Activated T-helper 1 cell treated with anti-CD3 and anti-CD28 coated beads, Interleukin-12 subunit alpha, Interleukin-12 subunit beta, Interleukin-2, Interleukin-4 antibody, amounts not matched to agents 30 ng/mL and 10 ng/mL and 1 ng/mL, durations not matched to agents 14 hours and 24 hours and 36 hours (primary cell): ENCODE measurements at regions of chr1 and their contacts with region 1.

Region 1: GRCh38 chr1:28819020-28819419 is 7.0 kb downstream of the OPRD1 start:
- DNase-seq: no peak
- H3K4me3 Mint-ChIP-seq: no peak overlapping the region
- H3K27ac Mint-ChIP-seq: no peak overlapping the region
- H3K4me1 Mint-ChIP-seq: no peaks in the 10 kb centered on the region
- H3K27me3 Mint-ChIP-seq: peaks cover 19% of the 10 kb centered on the region

Region 2: DNA sequence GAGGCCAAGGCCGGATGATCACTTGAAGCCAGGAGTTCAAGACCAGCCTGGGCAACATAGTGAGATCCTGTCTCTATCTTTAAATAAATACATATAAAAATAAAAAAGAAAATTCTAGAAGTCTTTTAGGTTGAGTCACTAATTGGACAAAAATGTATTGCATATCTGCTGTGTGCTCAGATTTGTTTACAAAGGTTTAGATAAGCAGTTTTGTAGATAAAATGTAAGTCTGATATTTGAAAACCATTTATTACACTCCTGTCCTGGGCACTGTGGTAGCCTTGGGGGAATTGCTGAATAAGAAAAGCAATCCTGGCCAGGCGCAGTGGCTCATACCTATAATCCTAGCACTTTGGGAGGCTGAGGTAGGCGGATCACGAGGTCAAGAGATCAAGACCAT is 138.9 kb before region 1 on chr1:
- intact Hi-C with region 1: no loop called
- DNase-seq: no peak
- H3K4me3 Mint-ChIP-seq: no peak overlapping the region
- H3K27ac Mint-ChIP-seq: no peak overlapping the region
- H3K4me1 Mint-ChIP-seq: no peaks in the 10 kb centered on the region
- H3K27me3 Mint-ChIP-seq: peaks cover 3% of the 10 kb centered on the region

Region 3: GRCh38 chr1:28716336-28716735 is 102.7 kb before region 1 on chr1:
- intact Hi-C with region 1: no loop called
- DNase-seq: no peak
- H3K4me3 Mint-ChIP-seq: no peak overlapping the region
- H3K27ac Mint-ChIP-seq: no peak overlapping the region
- H3K4me1 Mint-ChIP-seq: no peaks in the 10 kb centered on the region
- H3K27me3 Mint-ChIP-seq: no peaks in the 10 kb centered on the region

Region 4: GRCh38 chr1:28855469-28855951 is 36.5 kb after region 1 on chr1:
- intact Hi-C with region 1: loop called (anchors 1 kb)
- DNase-seq: no peak
- H3K4me3 Mint-ChIP-seq: no peak overlapping the region
- H3K27ac Mint-ChIP-seq: no peak overlapping the region
- H3K4me1 Mint-ChIP-seq: no peaks in the 10 kb centered on the region
- H3K27me3 Mint-ChIP-seq: peaks cover 12% of the 10 kb centered on the region